ENCODE measurements at regions of chr2 and their contacts with region 1.

Region 1: GRCh38 chr2:120231974-120232635 is 8.9 kb upstream of the TMEM185B start:
- DNase-seq: peak in 1 of 2 experiments; percentile 26
- H3K4me3 ChIP-seq: no peak overlapping the region
- H3K4me3 Mint-ChIP-seq: no peak overlapping the region
- H3K27ac Mint-ChIP-seq: peak overlapping the region; percentile 35
- H3K4me1 ChIP-seq: peaks cover 38% of the 10 kb centered on the region
- H3K4me1 Mint-ChIP-seq: peaks cover 37% of the 10 kb centered on the region
- H3K27me3 ChIP-seq: no peaks in the 10 kb centered on the region
- H3K27me3 Mint-ChIP-seq: no peaks in the 10 kb centered on the region
- CTCF ChIP-seq: no peak

Region 2: DNA sequence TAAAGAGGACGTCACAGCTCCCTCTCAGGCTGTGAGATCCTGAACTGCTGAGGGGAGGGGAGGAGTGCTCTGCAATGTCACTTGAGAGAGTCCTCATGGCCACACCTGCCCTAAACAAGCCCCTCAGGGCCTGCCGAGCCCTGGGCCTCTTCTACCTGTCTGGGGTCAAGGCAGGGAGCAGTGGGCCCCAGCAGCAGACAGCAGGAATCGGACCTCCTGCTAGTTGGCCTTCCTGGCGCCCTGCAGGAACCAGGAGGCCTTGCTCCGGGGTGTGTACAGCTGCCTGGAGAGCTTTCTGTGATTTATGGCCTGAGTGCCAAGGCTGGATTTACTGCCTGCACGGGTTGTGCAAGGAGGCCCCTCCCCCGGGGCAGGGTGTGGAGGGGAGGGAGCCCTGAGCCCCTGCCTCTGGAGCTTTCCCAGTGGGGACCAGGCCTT is 13.3 kb after region 1 on chr2:
- CTCF ChIA-PET with region 1: interaction called, 9 read pairs
- POLR2A ChIA-PET with region 1: interaction called, 5 read pairs
- intact Hi-C with region 1: loop called (anchors 1 kb)
- DNase-seq: peak; percentile 97 to 99
- H3K4me3 ChIP-seq: no peak overlapping the region
- H3K4me3 Mint-ChIP-seq: peak overlapping the region; percentile 55
- H3K27ac Mint-ChIP-seq: peak overlapping the region; percentile 93
- H3K4me1 ChIP-seq: peaks cover 32% of the 10 kb centered on the region
- H3K4me1 Mint-ChIP-seq: peaks cover 27% of the 10 kb centered on the region
- H3K27me3 ChIP-seq: no peaks in the 10 kb centered on the region
- H3K27me3 Mint-ChIP-seq: no peaks in the 10 kb centered on the region
- CTCF ChIP-seq: no peak

Measured in Caco-2 (cell line).